MCF 10A (cell line): ENCODE measurements at regions of chr15 and their contacts with region 1.

Region 1: GRCh38 chr15:89358755-89359439 is 24.3 kb upstream of the POLG start:
- DNase-seq: peak; percentile 72
- H3K4me3 Mint-ChIP-seq: peak overlapping the region; percentile 78
- H3K27ac Mint-ChIP-seq: no peak overlapping the region
- H3K4me1 Mint-ChIP-seq: no peaks in the 10 kb centered on the region
- H3K27me3 Mint-ChIP-seq: peaks cover 88% of the 10 kb centered on the region
- CTCF ChIP-seq: peak; percentile 92

Region 2: DNA sequence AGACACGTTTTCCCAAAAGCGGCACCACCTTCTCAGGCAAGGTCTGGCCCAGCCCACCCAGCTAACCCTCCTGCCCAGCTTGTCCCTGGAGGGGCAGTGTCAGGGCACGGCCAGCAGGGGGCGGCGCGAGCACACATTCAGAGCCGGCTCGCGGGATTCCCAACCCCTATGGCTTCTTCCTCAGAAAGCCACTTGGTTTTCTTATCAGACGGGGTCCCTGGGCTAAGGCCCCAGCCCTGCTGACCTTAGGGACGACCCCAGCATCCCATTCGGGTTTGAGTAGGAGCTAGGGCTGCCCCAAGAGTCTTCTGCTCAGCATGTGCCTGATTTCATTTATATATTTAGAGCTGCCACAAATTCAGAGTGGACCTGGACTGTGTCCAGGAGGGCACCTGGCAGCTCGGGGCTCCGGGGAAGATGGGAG is 152.0 kb before region 1 on chr15:
- CTCF ChIA-PET with region 1: interaction called, 12 read pairs
- POLR2A ChIA-PET with region 1: no interaction called
- intact Hi-C with region 1: no loop called
- DNase-seq: peak; percentile 80
- H3K4me3 Mint-ChIP-seq: peak overlapping the region; percentile 38
- H3K27ac Mint-ChIP-seq: no peak overlapping the region
- H3K4me1 Mint-ChIP-seq: no peaks in the 10 kb centered on the region
- H3K27me3 Mint-ChIP-seq: no peaks in the 10 kb centered on the region
- CTCF ChIP-seq: peak; percentile 95

Region 3: GRCh38 chr15:89243691-89244471 is 115.0 kb before region 1 on chr15 and contains the start of gene FANCI:
- CTCF ChIA-PET with region 1: no interaction called
- POLR2A ChIA-PET with region 1: no interaction called
- intact Hi-C with region 1: no loop called
- DNase-seq: peak; percentile 94
- H3K4me3 Mint-ChIP-seq: peak within 1 kb of the TSS; percentile 95
- H3K27ac Mint-ChIP-seq: peak within 1 kb of the TSS; percentile 93
- H3K4me1 Mint-ChIP-seq: peaks cover 31% of the 10 kb centered on the region
- H3K27me3 Mint-ChIP-seq: peaks cover 6% of the 10 kb centered on the region
- CTCF ChIP-seq: no peak
- total RNA-seq, gene FANCI: 24.0 and 34.0 TPM in 2 replicates

Region 4: GRCh38 chr15:89383365-89384175 is 24.7 kb after region 1 on chr15:
- CTCF ChIA-PET with region 1: interaction called, 90 read pairs
- POLR2A ChIA-PET with region 1: no interaction called
- intact Hi-C with region 1: no loop called
- DNase-seq: peak; percentile 96
- H3K4me3 Mint-ChIP-seq: no peak overlapping the region
- H3K27ac Mint-ChIP-seq: no peak overlapping the region
- H3K4me1 Mint-ChIP-seq: no peaks in the 10 kb centered on the region
- H3K27me3 Mint-ChIP-seq: peaks cover 45% of the 10 kb centered on the region
- CTCF ChIP-seq: no peak

Region 5: DNA sequence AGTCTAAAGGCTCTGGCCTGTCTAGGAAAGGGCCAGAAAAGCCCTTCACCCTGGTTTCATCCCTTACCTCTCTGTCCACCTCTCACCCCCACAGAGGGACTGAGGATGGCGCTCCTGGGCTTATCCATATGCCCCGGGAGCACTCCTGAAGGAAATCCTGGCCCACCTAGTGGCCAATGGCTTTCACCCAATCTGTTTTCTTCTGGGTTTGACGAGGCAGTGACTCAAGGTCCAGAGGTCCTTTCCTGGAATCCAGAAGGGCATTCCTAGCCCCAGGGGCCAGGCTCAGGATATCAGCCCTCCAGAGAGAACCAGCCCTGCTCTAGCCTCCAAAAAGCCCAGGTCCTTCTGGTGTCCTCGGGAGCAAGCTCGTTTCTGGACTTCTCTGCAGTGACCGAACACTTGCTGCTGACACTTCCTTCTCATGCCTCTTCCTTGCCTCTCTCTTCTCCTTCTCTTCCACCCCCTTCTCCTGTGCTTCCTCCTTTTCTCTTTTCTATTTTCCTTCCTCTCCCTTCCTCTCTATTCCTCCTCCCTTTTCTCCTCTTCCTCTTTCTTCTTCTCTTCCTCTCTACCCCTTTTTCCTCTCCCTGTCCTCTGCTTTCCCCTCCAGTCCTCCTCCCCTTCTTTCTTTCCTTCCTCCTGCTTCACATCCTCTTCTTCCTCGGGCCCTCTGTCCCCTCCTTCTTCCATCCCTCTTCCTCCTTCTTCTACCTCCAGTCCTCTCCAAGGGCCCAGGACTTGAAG is 77.8 kb after region 1 on chr15:
- CTCF ChIA-PET with region 1: interaction called, 443 read pairs
- POLR2A ChIA-PET with region 1: no interaction called
- intact Hi-C with region 1: no loop called
- DNase-seq: no peak
- H3K4me3 Mint-ChIP-seq: no peak overlapping the region
- H3K27ac Mint-ChIP-seq: no peak overlapping the region
- H3K4me1 Mint-ChIP-seq: no peaks in the 10 kb centered on the region
- H3K27me3 Mint-ChIP-seq: peaks cover 42% of the 10 kb centered on the region
- CTCF ChIP-seq: no peak

Region 6: GRCh38 chr15:89457097-89457496 is 98.2 kb after region 1 on chr15:
- CTCF ChIA-PET with region 1: interaction called, 23 read pairs
- POLR2A ChIA-PET with region 1: no interaction called
- intact Hi-C with region 1: no loop called
- DNase-seq: peak; percentile 37
- H3K4me3 Mint-ChIP-seq: no peak overlapping the region
- H3K27ac Mint-ChIP-seq: no peak overlapping the region
- H3K4me1 Mint-ChIP-seq: no peaks in the 10 kb centered on the region
- H3K27me3 Mint-ChIP-seq: no peaks in the 10 kb centered on the region
- CTCF ChIP-seq: no peak

Region 7: DNA sequence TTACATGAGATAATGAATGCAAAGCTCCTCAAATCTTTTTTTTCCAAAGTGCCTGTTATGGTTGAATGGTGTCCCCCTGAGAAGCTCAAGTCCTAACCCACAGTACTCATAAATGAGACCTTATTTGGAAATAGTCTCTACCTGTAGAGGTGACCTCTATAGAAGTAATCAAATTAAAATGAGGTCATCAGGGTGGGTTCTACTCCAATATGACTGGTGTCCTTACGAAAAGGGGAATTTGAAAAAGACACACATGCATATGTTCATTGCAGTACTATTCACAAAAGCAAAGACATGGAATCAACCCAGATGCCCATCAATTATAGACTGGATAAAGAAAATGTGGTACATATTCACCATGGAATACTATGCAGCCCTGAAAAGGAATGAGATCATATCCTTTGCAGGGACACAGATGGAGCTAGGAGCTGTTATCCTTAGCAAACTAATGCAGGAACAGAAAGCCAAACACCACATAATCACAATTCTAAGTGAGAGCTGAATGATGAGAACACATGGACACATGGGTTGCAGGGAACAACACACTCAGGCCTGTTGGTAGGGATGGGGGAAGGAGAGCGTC is 191.4 kb after region 1 on chr15:
- CTCF ChIA-PET with region 1: interaction called, 27 read pairs
- POLR2A ChIA-PET with region 1: no interaction called
- intact Hi-C with region 1: no loop called
- DNase-seq: no peak
- H3K4me3 Mint-ChIP-seq: no peak overlapping the region
- H3K27ac Mint-ChIP-seq: no peak overlapping the region
- H3K4me1 Mint-ChIP-seq: no peaks in the 10 kb centered on the region
- H3K27me3 Mint-ChIP-seq: no peaks in the 10 kb centered on the region
- CTCF ChIP-seq: no peak